ENCODE measurements at regions of chr20 and their contacts with region 1.

Region 1: DNA sequence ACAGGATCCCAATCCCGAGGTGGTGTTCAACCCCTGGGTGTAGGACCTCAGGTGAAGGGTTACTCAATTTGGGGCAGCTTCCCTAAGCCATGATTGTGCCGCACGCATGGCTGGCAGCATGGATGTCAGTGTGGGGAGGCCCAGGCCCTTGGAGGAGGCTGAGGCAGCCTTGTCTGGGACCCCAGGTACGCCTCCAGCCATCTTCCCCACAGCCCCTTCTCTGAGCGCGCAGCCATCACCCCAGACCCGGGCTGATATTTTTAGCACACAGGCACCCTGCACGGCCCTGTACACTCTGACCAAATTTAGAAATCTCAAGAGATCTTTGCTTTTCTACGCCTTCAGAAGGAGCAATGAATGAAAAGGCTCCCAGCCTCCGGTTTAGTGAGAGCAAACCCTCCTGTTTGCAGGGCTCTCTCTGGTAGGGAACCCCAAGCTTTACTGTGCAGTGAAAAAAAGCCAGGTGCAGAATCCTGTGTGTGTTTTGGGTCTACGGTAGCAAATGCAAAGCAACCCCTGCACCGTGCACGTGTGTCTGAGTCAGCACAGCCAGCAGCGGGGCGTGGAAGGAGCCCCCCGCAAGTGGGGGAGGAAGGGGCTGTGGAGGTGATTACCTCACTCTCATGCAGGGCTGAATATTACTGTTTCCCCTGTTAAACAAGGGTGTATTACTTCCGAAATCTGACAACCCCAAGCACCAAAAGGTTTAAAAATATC is 44.3 kb downstream of the CTCFL start:
- DNase-seq: peak; percentile 95
- H3K4me3 ChIP-seq: peak overlapping the region; percentile 62
- H3K27ac ChIP-seq: peak overlapping the region; percentile 99
- H3K4me1 ChIP-seq: peaks cover 95% of the 10 kb centered on the region
- CTCF ChIP-seq: no peak

Region 2: GRCh38 chr20:57391074-57391554 is 89.5 kb before region 1 on chr20 and contains the start of gene RBM38:
- CTCF ChIA-PET with region 1: interaction called, 4 read pairs
- POLR2A ChIA-PET with region 1: interaction called, 6 read pairs
- intact Hi-C with region 1: loop called (anchors 2 kb)
- DNase-seq: peak; percentile 87
- H3K4me3 ChIP-seq: peak within 1 kb of the TSS; percentile 99
- H3K27ac ChIP-seq: peak within 1 kb of the TSS; percentile 97
- H3K4me1 ChIP-seq: peaks cover 61% of the 10 kb centered on the region
- CTCF ChIP-seq: no peak
- total RNA-seq, gene RBM38: 136 and 174 TPM in 2 replicates

Region 3: GRCh38 chr20:57398231-57398821 is 82.3 kb before region 1 on chr20:
- CTCF ChIA-PET with region 1: interaction called, 6 read pairs
- POLR2A ChIA-PET with region 1: interaction called, 24 read pairs
- intact Hi-C with region 1: loop called (anchors 2 kb)
- DNase-seq: peak; percentile 97
- H3K4me3 ChIP-seq: peak overlapping the region; percentile 99
- H3K27ac ChIP-seq: peak overlapping the region; percentile 97
- H3K4me1 ChIP-seq: peaks cover 88% of the 10 kb centered on the region
- CTCF ChIP-seq: 0 out of 2 replicates have a peak, but pooled peaks have one; percentile 33

Region 4: GRCh38 chr20:57435498-57436222 is 44.9 kb before region 1 on chr20:
- CTCF ChIA-PET with region 1: no interaction called
- POLR2A ChIA-PET with region 1: interaction called, 3 read pairs
- intact Hi-C with region 1: loop called (anchors 2 kb)
- DNase-seq: peak; percentile 76
- H3K4me3 ChIP-seq: no peak overlapping the region
- H3K27ac ChIP-seq: no peak overlapping the region
- H3K4me1 ChIP-seq: peaks cover 64% of the 10 kb centered on the region
- CTCF ChIP-seq: peak; percentile 76

Region 5: GRCh38 chr20:57450419-57450818 is 30.2 kb before region 1 on chr20:
- CTCF ChIA-PET with region 1: no interaction called
- POLR2A ChIA-PET with region 1: interaction called, 7 read pairs
- intact Hi-C with region 1: loop called (anchors 2 kb)
- DNase-seq: peak; percentile 92
- H3K4me3 ChIP-seq: peak overlapping the region; percentile 64
- H3K27ac ChIP-seq: peak overlapping the region; percentile 84
- H3K4me1 ChIP-seq: peaks cover 65% of the 10 kb centered on the region
- CTCF ChIP-seq: no peak

Region 6: GRCh38 chr20:57493091-57493615 is 12.6 kb after region 1 on chr20:
- CTCF ChIA-PET with region 1: no interaction called
- POLR2A ChIA-PET with region 1: interaction called, 22 read pairs
- intact Hi-C with region 1: no loop called
- DNase-seq: peak; percentile 62
- H3K4me3 ChIP-seq: peak overlapping the region; percentile 67
- H3K27ac ChIP-seq: peak overlapping the region; percentile 82
- H3K4me1 ChIP-seq: peaks cover 63% of the 10 kb centered on the region
- CTCF ChIP-seq: no peak

Measured in OCI-LY7 (cell line).